ENCODE measurements at regions of chr5 and their contacts with region 1.

Region 1: GRCh38 chr5:17216176-17216973 is 1.1 kb upstream of the BASP1 start:
- DNase-seq: peak; percentile 76
- ATAC-seq: peak; percentile 24
- H3K4me3 ChIP-seq: peak overlapping the region; percentile 49
- H3K27ac ChIP-seq: peak overlapping the region; percentile 27
- H3K4me1 ChIP-seq: peaks cover 3% of the 10 kb centered on the region
- H3K27me3 ChIP-seq: no peaks in the 10 kb centered on the region; the same call in 1 of the 2 replicates
- CTCF ChIP-seq: peak; percentile 88
- POLR2A ChIP-seq: no peak
- RAD21 ChIP-seq: peak; percentile 95

Region 2: GRCh38 chr5:17169507-17169906 is 46.9 kb before region 1 on chr5:
- CTCF ChIA-PET with region 1: no interaction called
- POLR2A ChIA-PET with region 1: no interaction called
- dilution Hi-C with region 1: no loop called
- in situ Hi-C with region 1: no loop called
- intact Hi-C with region 1: no loop called
- DNase-seq: peak; percentile 92
- ATAC-seq: peak; percentile 80
- H3K4me3 ChIP-seq: no peak overlapping the region
- H3K27ac ChIP-seq: peak overlapping the region; percentile 89; the same call in 1 of the 2 replicates
- H3K4me1 ChIP-seq: peaks cover 26% of the 10 kb centered on the region
- H3K27me3 ChIP-seq: no peaks in the 10 kb centered on the region
- CTCF ChIP-seq: no peak
- POLR2A ChIP-seq: no peak
- RAD21 ChIP-seq: no peak

Region 3: DNA sequence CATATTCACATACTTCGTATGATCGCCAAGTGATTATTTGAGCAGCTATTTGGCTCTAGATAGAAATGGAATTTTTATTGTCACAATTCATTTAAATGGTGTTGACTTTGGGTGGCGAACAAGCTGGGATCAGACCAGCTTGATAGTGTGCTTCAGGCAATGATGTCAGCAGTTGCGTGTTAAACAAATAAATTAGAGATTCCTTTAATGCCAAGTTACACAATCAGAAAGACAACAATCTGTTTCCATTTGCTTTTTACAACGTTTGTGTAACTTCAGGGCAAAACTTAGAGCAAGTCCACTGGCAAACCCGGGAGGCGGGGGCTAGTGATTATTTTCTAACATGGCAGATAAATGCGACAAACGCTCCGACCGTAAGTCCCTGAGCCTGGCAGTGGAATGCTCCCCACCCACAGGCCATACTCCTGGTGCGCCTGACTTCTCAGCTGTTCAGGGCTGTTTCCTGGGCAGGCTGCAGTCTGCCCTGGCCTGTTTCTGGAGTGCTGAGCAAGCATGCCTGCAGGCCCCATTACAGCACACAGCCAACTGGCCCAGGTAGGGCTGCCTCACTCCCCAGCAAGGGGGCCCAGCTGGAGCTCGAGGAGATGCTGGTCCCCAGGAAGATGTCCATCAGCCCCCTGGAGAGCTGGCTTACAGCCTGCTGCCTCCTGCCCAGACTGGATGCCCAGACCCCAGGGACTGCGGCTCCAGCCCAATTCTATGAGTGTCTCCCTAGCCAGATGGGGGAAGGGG is 89.8 kb after region 1 on chr5:
- CTCF ChIA-PET with region 1: no interaction called
- POLR2A ChIA-PET with region 1: no interaction called
- dilution Hi-C with region 1: no loop called
- in situ Hi-C with region 1: no loop called
- intact Hi-C with region 1: loop called (anchors 2 kb)
- DNase-seq: peak; percentile 84
- ATAC-seq: peak; percentile 76
- H3K4me3 ChIP-seq: no peak overlapping the region
- H3K27ac ChIP-seq: peak overlapping the region; percentile 89
- H3K4me1 ChIP-seq: peaks cover 9% of the 10 kb centered on the region
- H3K27me3 ChIP-seq: no peaks in the 10 kb centered on the region
- CTCF ChIP-seq: no peak
- POLR2A ChIP-seq: no peak
- RAD21 ChIP-seq: no peak

Region 4: GRCh38 chr5:17743580-17744435 is 527.4 kb after region 1 on chr5:
- CTCF ChIA-PET with region 1: interaction called, 3 read pairs
- POLR2A ChIA-PET with region 1: no interaction called
- dilution Hi-C with region 1: no loop called
- in situ Hi-C with region 1: no loop called
- intact Hi-C with region 1: loop called (anchors 10 kb)
- DNase-seq: peak; percentile 68
- ATAC-seq: peak; percentile 88
- H3K4me3 ChIP-seq: no peak overlapping the region
- H3K27ac ChIP-seq: peak overlapping the region; percentile 81; the same call in 1 of the 2 replicates
- H3K4me1 ChIP-seq: no peaks in the 10 kb centered on the region
- H3K27me3 ChIP-seq: no peaks in the 10 kb centered on the region
- CTCF ChIP-seq: no peak
- POLR2A ChIP-seq: no peak
- RAD21 ChIP-seq: no peak

Region 5: DNA sequence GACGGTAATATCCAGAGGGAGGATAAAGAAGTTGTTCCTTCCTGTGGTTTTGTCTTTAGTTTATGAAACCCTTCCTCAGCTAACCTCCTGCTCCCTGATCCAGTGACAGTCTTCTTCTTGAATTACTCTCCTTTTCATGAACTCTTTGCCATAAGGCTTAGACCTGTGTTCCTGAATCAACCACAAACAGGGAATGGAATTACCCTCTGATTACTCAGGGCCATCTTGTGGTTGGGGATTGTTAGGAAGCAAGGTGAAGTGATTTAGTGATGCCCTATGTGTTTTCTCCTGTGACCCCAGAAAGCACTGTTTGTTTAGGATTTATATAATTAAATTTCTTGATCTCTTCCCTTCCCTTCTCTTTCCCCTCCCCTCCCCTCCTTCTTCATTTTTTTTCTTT is 827.0 kb after region 1 on chr5:
- CTCF ChIA-PET with region 1: no interaction called
- POLR2A ChIA-PET with region 1: no interaction called
- dilution Hi-C with region 1: no loop called
- in situ Hi-C with region 1: no loop called
- intact Hi-C with region 1: loop called (anchors 10 kb)
- DNase-seq: no peak
- ATAC-seq: no peak
- H3K4me3 ChIP-seq: no peak overlapping the region
- H3K27ac ChIP-seq: no peak overlapping the region
- H3K4me1 ChIP-seq: no peaks in the 10 kb centered on the region
- H3K27me3 ChIP-seq: no peaks in the 10 kb centered on the region
- CTCF ChIP-seq: no peak
- POLR2A ChIP-seq: no peak
- RAD21 ChIP-seq: no peak

Region 6: GRCh38 chr5:18305297-18305924 is 1089.0 kb after region 1 on chr5:
- CTCF ChIA-PET with region 1: interaction called, 27 read pairs
- POLR2A ChIA-PET with region 1: no interaction called
- dilution Hi-C with region 1: no loop called
- in situ Hi-C with region 1: no loop called
- intact Hi-C with region 1: loop called (anchors 1 kb)
- DNase-seq: peak; percentile 39
- ATAC-seq: peak; percentile 90
- H3K4me3 ChIP-seq: no peak overlapping the region
- H3K27ac ChIP-seq: no peak overlapping the region
- H3K4me1 ChIP-seq: no peaks in the 10 kb centered on the region
- H3K27me3 ChIP-seq: no peaks in the 10 kb centered on the region
- CTCF ChIP-seq: peak; percentile 77
- POLR2A ChIP-seq: no peak
- RAD21 ChIP-seq: peak; percentile 81

Measured in IMR-90 (cell line).